ENCODE measurements at regions of chr12 and their contacts with region 1.

Region 1: GRCh38 chr12:53508534-53509199 is 1.4 kb upstream of the NPFF start:
- DNase-seq: peak; percentile 80 to 88
- H3K4me3 ChIP-seq: no peak overlapping the region
- H3K4me3 Mint-ChIP-seq: no peak overlapping the region
- H3K27ac Mint-ChIP-seq: no peak overlapping the region
- H3K4me1 ChIP-seq: no peaks in the 10 kb centered on the region
- H3K4me1 Mint-ChIP-seq: no peaks in the 10 kb centered on the region
- H3K27me3 ChIP-seq: no peaks in the 10 kb centered on the region
- H3K27me3 Mint-ChIP-seq: no peaks in the 10 kb centered on the region
- CTCF ChIP-seq: peak; percentile 81 to 91

Region 2: GRCh38 chr12:53252349-53252845 is 256.3 kb before region 1 on chr12:
- CTCF ChIA-PET with region 1: no interaction called
- POLR2A ChIA-PET with region 1: no interaction called
- intact Hi-C with region 1: no loop called
- DNase-seq: peak; percentile 45 to 56
- H3K4me3 ChIP-seq: peak overlapping the region; percentile 81
- H3K4me3 Mint-ChIP-seq: peak overlapping the region; percentile 93
- H3K27ac Mint-ChIP-seq: peak overlapping the region; percentile 84
- H3K4me1 ChIP-seq: peaks cover 18% of the 10 kb centered on the region
- H3K4me1 Mint-ChIP-seq: peaks cover 22% of the 10 kb centered on the region
- H3K27me3 ChIP-seq: no peaks in the 10 kb centered on the region
- H3K27me3 Mint-ChIP-seq: no peaks in the 10 kb centered on the region
- CTCF ChIP-seq: no peak

Region 3: DNA sequence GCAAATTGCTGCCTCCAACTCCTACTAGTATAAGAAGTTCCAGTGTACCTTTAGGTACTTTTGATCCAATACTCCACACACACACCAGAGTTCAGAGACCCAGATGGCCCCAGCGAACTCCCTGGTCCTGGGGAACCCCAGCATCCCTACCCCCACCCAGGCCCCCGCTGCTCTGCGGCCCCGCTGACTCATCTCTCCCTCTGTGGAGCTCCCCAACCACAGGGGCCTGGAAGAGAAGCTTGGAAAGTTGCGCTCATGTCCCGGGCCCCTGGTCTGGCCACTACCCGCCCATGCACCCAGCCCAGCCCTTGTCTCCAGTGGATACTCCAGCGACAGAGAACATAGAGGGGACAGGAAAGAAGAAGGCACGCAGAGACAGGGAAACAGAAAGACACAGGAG is 168.3 kb before region 1 on chr12:
- CTCF ChIA-PET with region 1: no interaction called
- POLR2A ChIA-PET with region 1: no interaction called
- intact Hi-C with region 1: no loop called
- DNase-seq: no peak
- H3K4me3 ChIP-seq: no peak overlapping the region
- H3K4me3 Mint-ChIP-seq: no peak overlapping the region
- H3K27ac Mint-ChIP-seq: no peak overlapping the region
- H3K4me1 ChIP-seq: 0 out of 2 replicates have a peak, but pooled peaks cover 2% of the 10 kb centered on the region
- H3K4me1 Mint-ChIP-seq: peaks cover 17% of the 10 kb centered on the region
- H3K27me3 ChIP-seq: no peaks in the 10 kb centered on the region
- H3K27me3 Mint-ChIP-seq: peaks cover 7% of the 10 kb centered on the region
- CTCF ChIP-seq: no peak

Region 4: DNA sequence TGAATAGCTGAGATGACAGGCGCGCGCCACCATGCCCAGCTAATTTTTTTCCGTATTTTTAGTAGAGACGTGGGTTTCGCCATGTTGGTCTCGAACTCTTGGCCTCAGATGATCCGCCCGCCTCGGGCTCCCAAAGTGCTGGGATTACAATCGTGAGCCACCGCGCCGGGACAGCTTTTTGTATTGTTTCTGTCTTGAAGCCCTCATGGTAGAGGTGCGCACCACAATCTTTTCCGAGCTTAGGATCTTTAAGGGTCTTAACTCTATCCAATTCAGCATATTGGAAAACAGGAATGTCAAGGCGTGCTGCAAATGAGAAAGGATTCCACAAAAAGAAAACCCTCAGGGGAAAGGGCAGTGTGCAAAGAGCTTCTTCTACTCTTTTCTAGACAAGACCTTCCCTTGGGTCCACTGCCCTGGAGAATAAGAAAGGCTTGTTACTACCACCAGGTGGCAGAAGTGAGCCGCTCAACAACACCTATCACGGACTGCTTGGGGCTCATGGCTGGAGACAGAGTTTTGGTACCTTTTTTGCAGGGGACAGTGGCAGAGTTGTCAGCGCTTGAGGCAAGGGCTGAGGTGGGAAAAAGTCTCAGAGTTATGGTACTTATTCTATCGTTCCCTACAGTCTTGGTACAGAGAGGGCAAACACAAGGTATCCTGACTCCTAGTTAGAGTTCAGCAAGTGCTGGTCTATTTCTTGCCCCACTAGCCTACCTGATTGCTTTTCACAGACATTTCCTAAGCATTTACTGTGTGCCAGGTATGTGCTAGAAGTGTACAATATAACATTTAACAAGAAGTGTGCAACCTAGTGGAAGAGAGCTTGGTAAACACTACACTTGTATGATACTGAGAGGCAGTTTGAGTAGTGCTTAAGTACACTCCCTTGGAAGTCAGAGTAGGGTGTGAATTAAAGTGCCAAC is 156.1 kb before region 1 on chr12:
- CTCF ChIA-PET with region 1: interaction called, 9 read pairs
- POLR2A ChIA-PET with region 1: interaction called, 4 read pairs
- intact Hi-C with region 1: loop called (anchors 1 kb)
- DNase-seq: peak; percentile 87 to 88
- H3K4me3 ChIP-seq: no peak overlapping the region
- H3K4me3 Mint-ChIP-seq: no peak overlapping the region
- H3K27ac Mint-ChIP-seq: peak overlapping the region; percentile 52
- H3K4me1 ChIP-seq: peaks cover 5% of the 10 kb centered on the region
- H3K4me1 Mint-ChIP-seq: peaks cover 10% of the 10 kb centered on the region
- H3K27me3 ChIP-seq: no peaks in the 10 kb centered on the region
- H3K27me3 Mint-ChIP-seq: no peaks in the 10 kb centered on the region
- CTCF ChIP-seq: peak; percentile 77 to 78

Region 5: DNA sequence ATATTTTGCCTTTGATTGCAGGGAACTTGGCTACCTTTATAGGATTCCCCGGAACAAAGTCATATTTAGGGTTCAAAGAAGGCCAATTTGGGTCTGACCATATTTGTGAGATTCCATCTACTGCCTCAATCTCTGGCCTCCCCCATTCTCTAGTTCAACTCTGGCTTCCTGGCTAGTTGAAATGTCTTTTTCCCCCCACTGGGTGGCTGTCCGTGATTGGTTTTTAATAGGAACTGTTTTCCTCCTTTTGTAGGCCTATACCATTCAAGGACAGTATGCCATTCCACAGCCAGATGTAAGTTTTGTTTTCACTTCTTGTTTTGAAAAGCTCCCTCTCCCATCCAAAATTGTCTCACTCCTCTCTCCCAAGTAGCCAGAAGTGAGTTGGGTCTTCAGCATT is 43.0 kb before region 1 on chr12:
- CTCF ChIA-PET with region 1: interaction called, 3 read pairs
- POLR2A ChIA-PET with region 1: no interaction called
- intact Hi-C with region 1: loop called (anchors 1 kb)
- DNase-seq: peak in 1 of 2 experiments; percentile 8
- H3K4me3 ChIP-seq: no peak overlapping the region
- H3K4me3 Mint-ChIP-seq: no peak overlapping the region
- H3K27ac Mint-ChIP-seq: peak overlapping the region; percentile 59
- H3K4me1 ChIP-seq: no peaks in the 10 kb centered on the region
- H3K4me1 Mint-ChIP-seq: peaks cover 18% of the 10 kb centered on the region
- H3K27me3 ChIP-seq: no peaks in the 10 kb centered on the region
- H3K27me3 Mint-ChIP-seq: no peaks in the 10 kb centered on the region
- CTCF ChIP-seq: no peak

Region 6: DNA sequence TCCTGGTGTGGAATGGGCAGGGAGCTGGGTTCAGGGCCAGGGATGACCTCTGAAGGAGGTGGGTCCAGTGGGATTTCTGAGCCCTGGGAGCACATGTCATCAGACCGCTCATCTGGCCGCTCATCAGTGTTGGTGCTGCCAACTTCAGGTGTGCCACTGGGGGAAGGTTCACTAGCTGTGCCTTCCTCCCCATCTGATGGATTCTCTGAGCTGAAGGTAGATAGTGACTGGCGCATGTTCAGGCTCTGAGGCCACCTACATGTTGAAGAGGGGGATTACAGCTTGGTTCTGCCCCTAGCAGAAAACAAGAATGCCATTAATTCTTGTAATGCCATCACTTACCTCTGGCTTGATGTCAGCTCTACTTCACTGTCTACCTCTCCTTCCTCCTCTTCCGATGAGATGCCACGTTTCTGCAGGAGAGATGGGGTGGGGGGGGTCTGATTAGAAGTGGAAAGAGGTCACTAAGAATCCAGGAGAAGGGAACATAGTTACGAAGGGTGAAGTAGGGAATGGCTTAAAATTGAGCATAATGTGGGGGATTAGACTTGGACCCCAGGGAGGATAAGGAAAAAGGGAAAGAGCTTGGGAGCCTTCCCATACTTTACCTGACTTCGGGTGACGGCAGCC is 26.6 kb before region 1 on chr12:
- CTCF ChIA-PET with region 1: interaction called, 7 read pairs
- POLR2A ChIA-PET with region 1: no interaction called
- intact Hi-C with region 1: loop called (anchors 1 kb)
- DNase-seq: peak; percentile 37 to 38
- H3K4me3 ChIP-seq: no peak overlapping the region
- H3K4me3 Mint-ChIP-seq: peak overlapping the region; percentile 10
- H3K27ac Mint-ChIP-seq: peak overlapping the region; percentile 46
- H3K4me1 ChIP-seq: no peaks in the 10 kb centered on the region
- H3K4me1 Mint-ChIP-seq: no peaks in the 10 kb centered on the region
- H3K27me3 ChIP-seq: no peaks in the 10 kb centered on the region
- H3K27me3 Mint-ChIP-seq: no peaks in the 10 kb centered on the region
- CTCF ChIP-seq: peak; percentile 21 to 46

Measured in Caco-2 (cell line).